ENCODE measurements at regions of chr3 and their contacts with region 1.

Region 1: DNA sequence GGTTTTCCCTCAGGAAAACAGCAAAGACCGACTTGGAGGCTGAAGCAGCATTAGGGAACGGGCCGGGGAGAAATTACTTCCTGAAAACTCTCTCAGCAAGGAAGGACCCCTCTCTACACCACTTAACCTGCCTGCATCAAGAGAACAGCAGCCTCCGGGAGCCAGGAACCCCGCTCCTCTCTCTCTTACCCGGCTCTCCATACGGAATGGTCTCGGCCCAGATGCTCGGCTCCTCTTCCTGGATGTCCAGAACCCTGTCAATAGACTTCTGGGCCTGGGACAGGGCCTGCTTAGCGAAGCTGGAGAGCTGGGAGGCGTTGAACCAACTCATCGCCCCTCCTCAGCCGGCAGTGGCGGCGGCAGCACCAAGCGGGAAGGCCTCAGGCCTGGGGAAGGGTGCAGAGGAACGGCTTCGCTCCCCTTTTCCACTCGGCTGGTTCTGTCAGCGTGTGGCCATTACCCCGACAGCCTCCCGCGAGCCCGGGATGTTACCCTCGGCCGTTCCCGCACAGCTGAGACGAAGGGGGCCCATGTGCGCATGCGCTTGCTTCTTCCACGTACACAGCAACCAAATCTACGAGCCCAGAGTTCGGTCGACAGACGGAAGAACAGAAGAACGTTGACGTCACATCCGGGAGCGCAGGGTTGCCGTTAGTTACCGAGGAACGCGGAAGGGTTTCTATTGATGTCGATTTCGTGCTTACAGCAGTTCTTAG is at the start of gene TMF1:
- DNase-seq: peak; percentile 98
- total RNA-seq, gene TMF1: 22.8 TPM

Region 2: GRCh38 chr3:68819361-68819760 is 232.6 kb before region 1 on chr3:
- intact Hi-C with region 1: no loop called
- DNase-seq: no peak

Region 3: DNA sequence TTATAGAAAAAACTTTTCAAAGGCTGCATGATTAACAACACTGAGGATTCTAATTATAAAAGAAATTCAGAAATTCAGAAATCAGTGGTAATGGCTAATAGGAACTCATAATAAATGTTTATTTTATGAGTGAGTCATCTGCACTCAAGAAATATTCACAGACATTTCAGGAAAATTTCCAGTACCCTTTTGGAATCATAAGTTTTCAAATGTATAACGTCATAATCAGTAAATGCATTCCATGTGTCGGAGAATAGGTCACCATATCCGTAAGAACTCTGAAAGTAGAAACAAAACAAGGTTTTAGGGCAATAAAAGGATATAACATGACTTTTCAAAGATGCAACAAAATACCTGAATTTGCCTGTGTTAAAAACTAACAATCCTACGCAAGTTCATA is 63.2 kb before region 1 on chr3:
- intact Hi-C with region 1: no loop called
- DNase-seq: no peak

Region 4: GRCh38 chr3:69013253-69014021 is 38.5 kb before region 1 on chr3 and contains the start of gene EOGT:
- intact Hi-C with region 1: loop called (anchors 5 kb)
- DNase-seq: peak; percentile 95
- total RNA-seq, gene EOGT: 44.0 TPM